Gastrocnemius medialis (tissue), 4 donors: ENCODE measurements at regions of chr16 and their contacts with region 1.

Region 1: GRCh38 chr16:24729362-24729984 is at the start of gene TNRC6A:
- DNase-seq: peak; percentile 85 to 92
- ATAC-seq: peak; percentile 91 to 92
- H3K4me3 ChIP-seq: peak within 1 kb of the TSS; percentile 57 to 92 (median 77)
- H3K27ac ChIP-seq: peak within 1 kb of the TSS; percentile 81 to 94 (median 89)
- H3K4me1 ChIP-seq: peaks cover 40 to 43% of the 10 kb centered on the region in 2 donors
- H3K27me3 ChIP-seq: no peaks in the 10 kb centered on the region
- CTCF ChIP-seq: no peak
- POLR2A ChIP-seq: peak; percentile 81 to 87
- total RNA-seq, gene TNRC6A: 16.9 to 26.0 (median 23.1) TPM

Region 2: DNA sequence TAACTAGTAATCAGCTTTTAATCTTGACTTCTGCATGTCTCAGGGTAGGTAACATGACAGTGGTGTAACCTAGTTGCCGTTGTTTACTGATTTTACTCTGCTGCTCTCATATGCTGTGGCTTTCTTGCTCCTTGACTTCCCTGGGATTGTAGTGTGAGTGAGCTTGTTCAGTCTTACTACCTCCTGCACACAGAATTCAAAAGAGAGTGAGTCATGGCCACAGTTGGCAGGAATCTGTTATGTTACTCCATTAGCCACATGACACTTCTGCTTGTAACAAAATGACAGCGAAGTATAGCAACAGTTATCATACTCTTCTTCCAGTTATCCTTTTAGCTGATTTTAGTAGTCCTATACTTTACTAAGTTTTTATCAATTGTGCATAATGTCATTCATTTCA is 18.8 kb after region 1 on chr16:
- in situ Hi-C with region 1: no loop called
- intact Hi-C with region 1: loop called (anchors 2 kb)
- DNase-seq: peak; percentile 83 to 87
- ATAC-seq: peak; percentile 93 to 99
- H3K4me3 ChIP-seq: peak overlapping the region in 1 of 4 donors; percentile 13
- H3K27ac ChIP-seq: peak overlapping the region; percentile 83 to 90 (median 86)
- H3K4me1 ChIP-seq: peaks cover 95 to 100% of the 10 kb centered on the region in 2 donors
- H3K27me3 ChIP-seq: no peaks in the 10 kb centered on the region
- CTCF ChIP-seq: no peak
- POLR2A ChIP-seq: peak; percentile 28 to 71

Region 3: GRCh38 chr16:24776501-24777220 is 47.2 kb after region 1 on chr16:
- in situ Hi-C with region 1: no loop called
- intact Hi-C with region 1: loop called (anchors 2 kb)
- DNase-seq: peak; percentile 73 to 75
- ATAC-seq: peak; percentile 93 to 96
- H3K4me3 ChIP-seq: peak overlapping the region in 1 of 4 donors; percentile 4
- H3K27ac ChIP-seq: peak overlapping the region; percentile 83 to 88 (median 86)
- H3K4me1 ChIP-seq: peaks cover 50 to 58% of the 10 kb centered on the region in 2 donors
- H3K27me3 ChIP-seq: no peaks in the 10 kb centered on the region
- CTCF ChIP-seq: no peak
- POLR2A ChIP-seq: no peak

Region 4: DNA sequence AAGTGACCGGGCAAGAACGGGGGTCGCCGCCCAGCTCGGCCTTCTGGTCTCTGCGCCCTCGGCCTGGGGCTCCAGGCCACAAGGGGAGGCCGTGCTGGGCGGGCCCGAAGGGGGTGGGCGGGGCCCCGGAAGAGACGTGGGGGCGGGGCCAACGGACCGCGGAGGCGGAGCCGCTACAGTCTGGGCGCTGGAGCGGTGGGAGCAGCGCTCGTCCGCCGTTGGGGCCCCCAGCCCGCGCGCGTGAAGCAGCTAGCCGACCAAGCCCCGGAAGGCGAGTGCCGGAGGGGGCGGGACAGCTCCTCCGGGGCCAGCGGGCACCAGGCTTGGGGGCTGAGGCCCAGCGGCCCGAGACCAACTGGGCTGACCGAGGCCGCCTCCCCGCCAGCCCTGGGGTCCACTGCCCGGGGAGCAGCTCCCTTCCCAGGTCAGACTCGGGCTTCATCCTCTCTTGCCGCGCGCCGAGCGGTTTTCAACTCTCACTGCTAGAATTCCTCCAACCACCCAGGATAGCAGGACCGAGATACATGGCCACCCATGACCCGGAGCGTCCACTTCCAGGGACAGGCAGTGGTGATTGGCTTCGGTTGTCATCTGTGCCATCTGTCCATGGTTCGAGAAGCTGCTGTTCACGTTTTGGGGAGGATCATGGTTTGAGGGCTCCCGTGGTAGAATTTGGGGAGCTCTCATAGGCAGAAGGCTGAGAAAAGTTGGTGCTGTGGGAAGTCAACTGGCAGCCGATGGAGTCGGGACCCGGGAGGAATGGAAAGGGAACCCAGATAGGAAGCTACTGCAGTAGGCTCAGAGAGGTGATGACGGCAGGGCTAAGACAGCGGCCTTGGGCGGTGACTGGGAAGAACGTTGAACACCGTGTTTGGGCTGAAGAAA is 337.5 kb after region 1 on chr16:
- in situ Hi-C with region 1: no loop called
- intact Hi-C with region 1: no loop called
- DNase-seq: peak; percentile 65 to 79
- ATAC-seq: peak; percentile 91 to 94
- H3K4me3 ChIP-seq: peak overlapping the region; percentile 75 to 99 (median 91)
- H3K27ac ChIP-seq: peak overlapping the region; percentile 87 to 96 (median 94)
- H3K4me1 ChIP-seq: peaks cover 14 to 15% of the 10 kb centered on the region in 2 donors
- H3K27me3 ChIP-seq: no peaks in the 10 kb centered on the region
- CTCF ChIP-seq: peak in 1 of 5 experiments; percentile 23
- POLR2A ChIP-seq: peak; percentile 78 to 80

Region 5: DNA sequence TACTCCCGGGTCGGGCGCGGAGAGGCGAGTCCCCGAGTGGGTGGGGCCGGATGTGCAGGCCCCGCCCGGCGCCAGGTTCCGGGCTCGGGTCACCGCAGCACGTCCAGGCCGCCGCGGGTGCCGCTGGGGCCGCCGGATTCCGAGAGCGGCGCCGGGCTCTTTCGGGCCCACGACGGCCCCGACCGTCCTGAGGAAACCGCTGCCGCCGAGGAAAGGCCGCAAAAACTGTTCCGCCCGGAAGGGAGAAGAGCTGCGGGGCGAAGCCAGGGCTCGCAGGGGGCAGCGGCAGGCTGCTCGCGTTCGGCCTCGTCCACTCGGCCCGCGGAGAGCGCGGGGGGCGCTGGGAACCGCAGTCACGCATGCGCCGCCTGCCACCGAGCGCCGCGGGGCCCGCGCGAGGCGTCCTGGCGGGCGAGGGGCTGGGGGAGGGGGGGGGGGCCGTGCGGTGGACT is 528.1 kb after region 1 on chr16 and contains the start of gene ZKSCAN2:
- in situ Hi-C with region 1: no loop called
- intact Hi-C with region 1: loop called (anchors 10 kb)
- DNase-seq: peak; percentile 86 to 87
- ATAC-seq: peak; percentile 83 to 90
- H3K4me3 ChIP-seq: peak within 1 kb of the TSS; percentile 79 to 93 (median 90)
- H3K27ac ChIP-seq: peak within 1 kb of the TSS; percentile 90 to 99 (median 98)
- H3K4me1 ChIP-seq: peaks cover 36 to 49% of the 10 kb centered on the region in 2 donors
- H3K27me3 ChIP-seq: no peaks in the 10 kb centered on the region
- CTCF ChIP-seq: no peak
- POLR2A ChIP-seq: peak; percentile 95 to 96
- total RNA-seq, gene ZKSCAN2: 2.9 to 6.9 (median 5.2) TPM